ENCODE measurements at regions of chrX and their contacts with region 1.

Region 1: DNA sequence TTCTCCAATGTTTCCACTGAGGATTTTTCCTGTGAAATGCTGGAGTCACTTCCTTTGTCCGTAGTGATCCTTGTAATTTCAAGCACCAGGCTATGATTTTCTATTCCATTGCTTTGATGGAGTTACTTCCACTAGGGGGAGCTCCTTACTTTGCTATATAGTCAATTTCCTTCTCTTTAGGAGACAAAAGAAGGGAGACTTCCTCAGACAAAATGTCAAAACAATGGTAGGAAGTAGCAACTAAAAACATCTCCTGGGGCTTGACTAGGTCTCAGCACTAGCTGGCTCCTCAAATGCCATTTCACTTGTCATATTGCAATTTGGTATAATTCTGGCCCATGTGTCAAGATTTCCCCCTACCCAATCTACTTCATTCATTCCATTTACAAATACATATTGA is 24.1 kb downstream of the ZCCHC12 start:
- DNase-seq: no peak
- H3K4me3 Mint-ChIP-seq: no peak overlapping the region
- H3K27ac Mint-ChIP-seq: no peak overlapping the region
- H3K4me1 Mint-ChIP-seq: no peaks in the 10 kb centered on the region
- H3K27me3 Mint-ChIP-seq: no peaks in the 10 kb centered on the region

Region 2: DNA sequence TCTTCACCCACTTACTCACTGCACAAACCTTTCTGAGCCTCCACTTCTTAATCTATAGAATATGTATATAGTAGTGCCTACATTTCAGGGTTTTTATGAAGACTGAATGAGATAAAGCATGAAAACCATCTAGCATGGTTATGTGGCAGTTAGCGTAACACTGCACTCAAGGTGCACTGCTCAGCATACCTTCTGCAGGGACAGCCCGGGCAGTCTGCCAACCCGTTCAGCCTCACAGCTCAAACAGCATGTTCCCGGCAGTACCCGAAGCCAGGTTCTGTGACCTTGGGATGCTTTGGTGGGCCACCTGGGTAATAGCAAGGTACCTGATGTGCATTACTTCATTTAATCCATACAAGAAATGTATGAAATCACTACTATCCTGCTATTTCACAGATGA is 270.6 kb before region 1 on chrX:
- CTCF ChIA-PET with region 1: no interaction called
- intact Hi-C with region 1: no loop called
- DNase-seq: no peak
- H3K4me3 Mint-ChIP-seq: no peak overlapping the region
- H3K27ac Mint-ChIP-seq: no peak overlapping the region
- H3K4me1 Mint-ChIP-seq: no peaks in the 10 kb centered on the region
- H3K27me3 Mint-ChIP-seq: no peaks in the 10 kb centered on the region

Region 3: DNA sequence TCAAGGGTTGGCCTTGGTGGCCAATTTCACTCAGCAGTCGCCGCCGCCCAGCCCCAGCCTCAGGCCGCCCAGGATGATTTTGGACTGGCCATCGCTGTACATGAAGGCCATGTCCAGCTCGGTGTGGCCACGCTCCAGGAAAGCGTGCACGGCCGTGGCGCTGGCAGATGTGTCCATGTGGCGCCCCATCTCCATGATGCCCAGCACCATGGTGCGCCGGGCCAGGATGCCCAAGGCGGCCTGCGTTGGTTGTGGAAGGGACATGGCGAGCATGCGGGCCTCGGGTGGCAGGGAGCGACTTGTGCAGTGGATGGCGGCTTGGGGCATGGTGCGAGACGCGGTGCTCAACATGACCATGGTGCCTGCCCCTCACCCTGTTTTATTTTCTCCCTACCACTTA is 31.3 kb after region 1 on chrX:
- CTCF ChIA-PET with region 1: no interaction called
- intact Hi-C with region 1: no loop called
- DNase-seq: no peak
- H3K4me3 Mint-ChIP-seq: no peak overlapping the region
- H3K27ac Mint-ChIP-seq: no peak overlapping the region
- H3K4me1 Mint-ChIP-seq: no peaks in the 10 kb centered on the region
- H3K27me3 Mint-ChIP-seq: no peaks in the 10 kb centered on the region

Region 4: DNA sequence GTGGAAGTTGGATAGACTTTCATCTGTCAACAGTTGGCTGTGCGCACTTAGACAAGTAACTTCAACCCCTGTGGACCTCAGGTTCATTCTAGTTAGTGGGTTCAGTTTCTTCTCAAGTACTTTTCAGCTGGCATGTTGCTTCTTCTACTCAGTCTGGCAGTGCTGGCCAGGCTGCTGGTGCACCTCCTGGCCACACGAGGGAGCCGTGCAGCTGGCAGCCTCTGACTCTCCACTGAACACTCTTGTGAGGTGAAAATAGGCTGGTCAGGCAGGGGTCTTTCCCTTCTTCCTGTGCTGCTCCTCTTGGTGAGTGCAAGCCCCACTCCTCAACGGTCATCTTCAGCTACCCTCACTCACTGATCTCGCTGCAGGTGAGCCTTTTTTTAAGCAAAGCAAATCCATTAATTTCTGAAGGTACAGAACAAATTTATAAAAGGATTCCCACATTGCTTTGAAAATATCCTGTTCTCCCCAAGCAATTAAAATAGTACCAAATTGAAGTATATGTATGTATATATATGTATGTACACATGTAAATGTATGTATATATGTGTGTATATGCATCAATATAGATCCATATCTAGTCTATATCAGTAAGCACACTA is 157.3 kb after region 1 on chrX:
- CTCF ChIA-PET with region 1: interaction called, 4 read pairs
- intact Hi-C with region 1: loop called (anchors 1 kb)
- DNase-seq: peak; percentile 63
- H3K4me3 Mint-ChIP-seq: no peak overlapping the region
- H3K27ac Mint-ChIP-seq: no peak overlapping the region
- H3K4me1 Mint-ChIP-seq: peaks cover 12% of the 10 kb centered on the region
- H3K27me3 Mint-ChIP-seq: no peaks in the 10 kb centered on the region

Region 5: DNA sequence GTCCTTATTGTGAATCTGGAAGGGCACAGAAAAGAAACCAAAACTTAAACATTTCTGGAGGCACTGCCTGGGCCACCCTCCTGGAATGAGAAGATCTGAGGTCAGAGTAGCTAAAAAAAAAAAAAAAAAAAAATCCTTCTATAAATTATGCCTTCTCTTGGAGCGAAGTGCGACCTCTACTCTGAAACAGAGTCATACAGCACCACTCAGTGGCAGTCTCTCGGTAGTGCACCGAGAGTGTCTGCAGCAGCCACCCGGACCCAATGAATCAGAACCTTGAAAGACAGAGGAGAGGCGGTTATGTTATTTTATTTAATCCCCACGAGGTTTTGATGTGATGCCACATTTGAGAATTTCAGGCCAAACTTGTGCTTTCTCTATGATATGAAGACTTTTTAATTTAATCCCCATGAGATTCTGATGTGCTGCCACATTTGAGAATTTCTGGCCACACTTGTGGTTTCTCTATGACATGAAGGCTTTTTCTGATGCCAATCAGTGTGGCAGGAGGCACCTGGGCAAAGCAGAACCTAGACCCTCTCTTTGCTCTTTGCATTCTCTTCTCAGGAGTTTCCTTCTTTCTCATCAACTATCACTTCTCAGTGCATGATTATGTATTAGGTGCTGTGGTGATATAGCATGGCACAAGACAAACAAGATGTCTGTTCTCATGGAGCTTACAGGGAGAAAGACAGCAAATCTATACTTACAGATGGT is 219.5 kb after region 1 on chrX:
- CTCF ChIA-PET with region 1: interaction called, 20 read pairs
- intact Hi-C with region 1: loop called (anchors 1 kb)
- DNase-seq: peak; percentile 72
- H3K4me3 Mint-ChIP-seq: no peak overlapping the region
- H3K27ac Mint-ChIP-seq: no peak overlapping the region
- H3K4me1 Mint-ChIP-seq: no peaks in the 10 kb centered on the region
- H3K27me3 Mint-ChIP-seq: no peaks in the 10 kb centered on the region

Region 6: GRCh38 chrX:119211649-119212014 is 364.0 kb after region 1 on chrX:
- CTCF ChIA-PET with region 1: no interaction called
- intact Hi-C with region 1: loop called (anchors 5 kb)
- DNase-seq: no peak
- H3K4me3 Mint-ChIP-seq: no peak overlapping the region
- H3K27ac Mint-ChIP-seq: no peak overlapping the region
- H3K4me1 Mint-ChIP-seq: no peaks in the 10 kb centered on the region
- H3K27me3 Mint-ChIP-seq: no peaks in the 10 kb centered on the region

Region 7: GRCh38 chrX:119266364-119266995 is 418.8 kb after region 1 on chrX:
- CTCF ChIA-PET with region 1: no interaction called
- intact Hi-C with region 1: loop called (anchors 2 kb)
- DNase-seq: peak; percentile 25
- H3K4me3 Mint-ChIP-seq: no peak overlapping the region
- H3K27ac Mint-ChIP-seq: no peak overlapping the region
- H3K4me1 Mint-ChIP-seq: no peaks in the 10 kb centered on the region
- H3K27me3 Mint-ChIP-seq: peaks cover 2% of the 10 kb centered on the region

Region 8: GRCh38 chrX:119482481-119483480 is 635.1 kb after region 1 on chrX:
- CTCF ChIA-PET with region 1: no interaction called
- intact Hi-C with region 1: no loop called
- DNase-seq: peak; percentile 68
- H3K4me3 Mint-ChIP-seq: peak overlapping the region; percentile 70
- H3K27ac Mint-ChIP-seq: no peak overlapping the region
- H3K4me1 Mint-ChIP-seq: peaks cover 11% of the 10 kb centered on the region
- H3K27me3 Mint-ChIP-seq: no peaks in the 10 kb centered on the region

Measured in activated naive CD4-positive, alpha-beta T cell treated with anti-CD3 and anti-CD28 coated beads for 36 hours (primary cell).